Posterior cingulate gyrus (tissue), 11 donors: ENCODE measurements at regions of chr14 and their contacts with region 1.

Region 1: DNA sequence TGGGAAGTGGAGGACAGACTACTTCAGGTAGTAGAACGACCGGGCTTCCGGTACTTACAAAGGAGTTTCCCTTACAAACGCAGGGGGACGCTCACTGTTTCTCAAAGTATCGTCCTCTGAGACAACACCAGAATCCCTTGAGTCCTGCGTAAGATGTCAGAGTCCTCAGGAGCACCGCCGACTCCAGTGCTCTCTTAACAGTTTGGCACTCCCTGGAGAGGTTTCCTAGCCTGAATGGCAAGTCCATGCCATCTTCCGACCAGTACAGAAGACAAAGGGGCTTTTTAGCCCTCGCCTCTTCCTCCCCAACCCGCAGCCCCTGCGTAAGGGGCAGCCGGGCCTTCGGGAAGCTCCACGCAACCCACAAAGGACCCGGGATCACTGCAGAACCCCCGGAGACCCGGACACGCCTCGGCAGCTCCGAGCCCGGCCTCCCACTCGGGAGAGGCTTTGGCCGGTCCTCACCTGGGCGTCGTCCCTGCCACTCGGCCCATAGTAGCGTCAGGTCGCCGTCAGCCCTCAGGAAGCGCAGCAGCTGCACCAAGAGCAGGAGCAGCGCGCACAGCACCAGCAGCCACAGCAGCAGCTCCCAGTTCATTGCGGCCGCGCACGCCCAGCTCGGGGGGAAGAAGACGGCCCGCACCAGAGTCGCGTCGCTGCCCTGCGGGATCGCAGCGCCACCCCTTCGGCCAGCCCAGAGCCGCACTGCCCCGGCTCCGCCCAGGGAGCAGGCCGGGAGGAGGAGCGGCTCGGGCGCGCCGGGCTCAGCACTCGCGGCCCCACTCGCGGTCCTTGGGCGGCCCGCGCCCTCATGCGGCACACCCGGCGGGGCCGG is at the start of gene DHRS7:
- DNase-seq: peak; percentile 69 to 97 (median 82)

Region 2: DNA sequence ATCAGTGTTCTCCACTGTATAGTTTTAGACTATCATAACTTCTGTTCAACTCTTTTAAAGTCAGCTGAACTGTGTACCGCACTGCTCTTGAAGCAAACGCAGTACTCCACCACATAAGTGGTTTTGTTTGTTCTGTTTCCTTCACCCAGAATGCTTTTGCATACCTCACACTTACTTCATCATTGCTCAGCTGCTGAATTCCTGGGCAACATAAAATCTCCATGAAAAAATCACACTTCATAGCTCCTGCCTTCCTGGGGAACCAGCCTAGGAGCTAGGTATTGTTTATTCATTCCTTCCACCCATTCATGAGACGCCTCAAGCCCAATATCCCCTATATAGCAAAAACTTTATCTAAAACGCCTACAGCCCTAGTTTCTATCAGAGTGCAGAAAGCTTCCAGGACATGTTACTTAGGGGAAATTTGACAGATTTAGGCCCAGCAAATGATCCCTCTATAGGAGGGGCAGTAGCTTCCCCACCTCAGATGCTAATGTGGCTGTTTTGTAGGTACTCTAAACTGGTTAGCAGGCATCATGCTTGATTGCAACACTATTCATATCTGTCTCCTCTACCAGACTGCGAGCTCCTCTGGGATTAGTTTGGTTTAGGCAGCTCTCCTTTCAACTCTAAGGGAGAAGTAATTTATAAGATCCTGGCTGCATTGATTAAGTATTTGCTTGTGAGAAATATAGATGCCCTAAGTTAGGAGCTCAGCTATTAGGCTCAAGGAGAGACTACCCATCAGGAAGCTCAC is 200.5 kb before region 1 on chr14:
- intact Hi-C with region 1: loop called (anchors 2 kb)
- DNase-seq: no peak

Region 3: GRCh38 chr14:60064491-60065072 is 100.3 kb before region 1 on chr14:
- intact Hi-C with region 1: loop called (anchors 1 kb)
- DNase-seq: no peak

Region 4: GRCh38 chr14:60091550-60092530 is 73.1 kb before region 1 on chr14 and contains the start of gene PCNX4:
- intact Hi-C with region 1: loop called (anchors 1 kb)
- DNase-seq: peak; percentile 92 to 99 (median 95)

Region 5: DNA sequence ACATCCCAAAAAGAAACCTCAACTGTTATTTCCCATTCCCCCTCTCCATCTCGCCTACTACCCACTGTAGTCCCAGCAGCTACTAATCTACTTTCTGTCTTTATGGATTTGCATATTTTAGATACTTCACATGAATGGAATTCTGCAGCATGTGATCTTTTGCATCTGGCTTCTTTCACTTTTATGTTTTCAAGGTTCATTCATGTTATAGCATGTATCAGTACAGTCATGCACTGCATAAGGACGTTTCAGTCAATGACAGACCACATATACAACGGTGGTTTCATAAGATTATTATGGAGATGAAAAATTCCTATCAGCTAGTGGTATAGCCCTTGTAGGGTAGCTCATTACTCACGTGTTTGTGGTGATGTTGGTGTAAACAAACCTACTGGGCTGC is 48.7 kb before region 1 on chr14:
- intact Hi-C with region 1: no loop called
- DNase-seq: no peak